ENCODE measurements at regions of chr3 and their contacts with region 1.

Region 1: GRCh38 chr3:126752303-126752842 is 48.3 kb downstream of the CHCHD6 start:
- DNase-seq: peak; percentile 88
- H3K4me3 ChIP-seq: no peak overlapping the region
- H3K27ac ChIP-seq: no peak overlapping the region
- H3K4me1 ChIP-seq: peaks cover 0 to 11% (median 0%) of the 10 kb centered on the region in 6 donors
- H3K27me3 ChIP-seq: no peaks in the 10 kb centered on the region
- CTCF ChIP-seq: peak; percentile 62 to 89 (median 75)
- POLR2A ChIP-seq: no peak

Region 2: DNA sequence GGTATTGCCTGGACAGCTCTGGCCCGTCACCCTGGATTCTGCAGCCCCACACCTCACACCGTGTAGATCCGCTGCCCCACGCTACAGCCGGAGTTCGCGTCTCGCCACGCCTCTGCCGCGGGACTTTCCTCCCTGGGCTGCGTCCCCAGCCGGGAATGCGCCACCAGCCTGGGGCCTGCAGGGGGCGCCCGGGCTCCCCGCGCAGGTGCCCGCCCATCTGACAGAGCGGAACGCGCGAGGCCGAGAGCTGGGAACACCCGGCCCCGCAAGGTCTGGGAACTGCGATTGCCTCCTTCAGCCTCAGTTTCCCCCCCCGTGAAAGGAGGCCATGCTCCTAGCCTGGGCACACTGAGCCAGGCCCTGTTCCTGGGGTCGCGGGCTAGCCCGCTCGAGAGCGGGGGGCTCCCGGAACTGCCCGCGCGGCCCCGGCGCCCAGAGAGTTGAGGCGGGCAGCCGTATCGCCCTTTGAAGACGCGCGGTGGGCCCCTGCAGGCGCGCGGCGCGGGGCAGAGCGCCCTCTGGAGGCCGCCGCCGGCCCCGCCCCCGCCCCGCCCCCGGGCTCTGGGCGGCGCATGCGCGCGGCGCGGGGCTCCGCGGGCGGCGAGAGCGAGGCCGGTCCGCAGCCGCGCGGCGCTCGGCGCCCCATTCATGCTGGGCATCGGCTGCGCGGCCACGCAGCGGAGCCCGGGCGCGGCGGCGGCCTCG is 230.2 kb after region 1 on chr3 and contains the start of gene PLXNA1:
- intact Hi-C with region 1: loop called (anchors 5 kb)
- DNase-seq: peak; percentile 97
- H3K4me3 ChIP-seq: peak within 1 kb of the TSS; percentile 49 to 87 (median 62)
- H3K27ac ChIP-seq: peak within 1 kb of the TSS; percentile 87 to 97 (median 92)
- H3K4me1 ChIP-seq: peaks cover 15 to 57% (median 47%) of the 10 kb centered on the region in 6 donors
- H3K27me3 ChIP-seq: peaks cover 0 to 39% (median 0%) of the 10 kb centered on the region in 7 donors
- CTCF ChIP-seq: peak; percentile 92 to 99 (median 98)
- POLR2A ChIP-seq: no peak
- total RNA-seq, gene PLXNA1: 27.8 to 47.6 (median 41.4) TPM

Region 3: DNA sequence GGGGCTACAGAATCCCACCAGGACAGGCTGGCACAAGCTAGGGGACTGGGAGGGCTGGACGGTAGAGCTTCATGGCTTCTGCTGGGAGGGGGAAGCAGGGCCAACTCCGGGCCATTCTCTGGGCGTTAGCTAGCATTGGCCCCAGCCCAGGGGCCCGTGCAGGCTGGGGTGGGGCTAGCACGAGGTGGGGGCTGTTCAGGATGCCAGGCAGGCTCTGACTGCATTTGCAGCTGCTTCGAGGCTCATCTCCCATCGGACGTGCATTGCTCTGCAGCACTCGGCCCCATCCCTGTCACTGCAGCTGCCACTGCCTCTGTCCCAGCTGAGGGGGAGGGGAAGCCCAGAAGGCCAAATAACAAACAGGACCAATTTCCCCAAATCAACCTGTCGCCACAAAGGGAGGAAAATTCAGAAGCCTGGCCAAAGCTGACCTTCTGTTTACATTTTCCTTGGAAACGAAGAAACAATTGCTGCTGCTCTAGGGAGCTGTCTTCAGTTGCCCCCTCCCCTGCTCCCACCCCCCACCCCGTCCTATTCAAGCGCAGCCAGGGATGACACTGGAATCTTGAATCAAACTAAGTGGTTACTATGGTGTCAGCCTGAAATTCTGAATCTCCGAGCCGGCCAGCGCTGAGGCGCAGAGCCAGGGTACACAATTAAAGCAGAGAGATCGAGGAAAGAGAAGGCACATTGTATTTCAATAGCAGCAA is 674.2 kb after region 1 on chr3:
- intact Hi-C with region 1: no loop called
- DNase-seq: peak; percentile 66
- H3K4me3 ChIP-seq: no peak overlapping the region
- H3K27ac ChIP-seq: no peak overlapping the region
- H3K4me1 ChIP-seq: no peaks in the 10 kb centered on the region
- H3K27me3 ChIP-seq: peaks cover 0 to 93% (median 15%) of the 10 kb centered on the region in 7 donors
- CTCF ChIP-seq: no peak
- POLR2A ChIP-seq: no peak

Region 4: DNA sequence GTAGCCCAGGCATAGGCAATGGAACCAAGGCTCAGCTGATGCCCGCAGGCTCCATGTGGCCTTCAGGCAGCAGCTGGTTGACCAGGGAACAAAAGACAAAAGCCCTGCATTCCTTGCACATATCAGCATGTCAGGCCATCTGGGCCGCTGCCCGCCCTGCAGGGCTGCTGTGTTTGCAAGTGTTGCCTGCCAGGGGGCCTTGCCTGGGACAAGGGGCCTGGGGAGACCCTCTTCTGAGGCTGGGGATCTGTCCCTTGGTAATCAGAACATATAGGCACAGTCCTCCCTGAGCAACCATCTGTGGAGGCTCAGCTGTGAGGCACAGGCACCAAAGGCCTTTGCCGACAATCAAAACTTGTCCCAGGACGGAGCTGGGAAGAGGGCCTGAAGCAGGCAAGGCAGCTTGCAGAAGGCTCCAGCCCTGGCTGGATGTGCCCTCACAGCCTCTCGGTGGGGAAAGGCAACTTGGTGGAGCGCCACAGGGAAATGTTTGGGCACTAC is 700.0 kb after region 1 on chr3:
- intact Hi-C with region 1: loop called (anchors 5 kb)
- DNase-seq: peak; percentile 55
- H3K4me3 ChIP-seq: no peak overlapping the region
- H3K27ac ChIP-seq: no peak overlapping the region
- H3K4me1 ChIP-seq: peaks cover 13 to 24% (median 20%) of the 10 kb centered on the region in 6 donors
- H3K27me3 ChIP-seq: peaks cover 0 to 69% (median 35%) of the 10 kb centered on the region in 7 donors
- CTCF ChIP-seq: no peak
- POLR2A ChIP-seq: no peak

Region 5: GRCh38 chr3:127547761-127548605 is 795.6 kb after region 1 on chr3:
- intact Hi-C with region 1: loop called (anchors 5 kb)
- DNase-seq: peak; percentile 93
- H3K4me3 ChIP-seq: peak overlapping the region; percentile 41 to 81 (median 55)
- H3K27ac ChIP-seq: peak overlapping the region in 6 of 8 donors; percentile 19 to 80 (median 63)
- H3K4me1 ChIP-seq: peaks cover 0 to 29% (median 16%) of the 10 kb centered on the region in 6 donors
- H3K27me3 ChIP-seq: no peaks in the 10 kb centered on the region
- CTCF ChIP-seq: peak; percentile 32 to 90 (median 75)
- POLR2A ChIP-seq: no peak

Measured in spleen (tissue), 13 donors.